ENCODE measurements at regions of chr2 and their contacts with region 1.

Region 1: DNA sequence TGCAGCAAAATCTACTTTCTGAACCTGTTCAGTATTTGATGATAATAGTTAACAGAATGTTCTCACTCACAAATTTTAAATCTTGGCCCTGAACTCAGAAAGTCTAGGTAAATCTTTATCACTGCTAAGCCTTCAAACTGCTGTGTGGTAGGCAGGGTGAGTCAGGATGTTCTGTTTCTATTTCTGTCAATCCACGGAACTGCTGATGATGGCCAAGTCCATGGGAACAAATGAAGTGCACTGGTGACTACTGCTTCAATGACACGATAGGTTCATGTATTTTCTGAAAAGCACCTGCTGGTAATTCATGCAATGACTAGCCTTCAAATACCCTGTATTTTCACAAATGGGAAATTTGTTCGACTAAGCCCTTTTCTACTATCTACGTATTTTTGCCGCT is 14.2 kb downstream of the NIFK start:
- DNase-seq: no peak
- H3K4me3 ChIP-seq: no peak overlapping the region
- H3K27ac ChIP-seq: no peak overlapping the region
- H3K4me1 ChIP-seq: no peaks in the 10 kb centered on the region
- CTCF ChIP-seq: no peak

Region 2: GRCh38 chr2:121085801-121086200 is 636.7 kb before region 1 on chr2:
- CTCF ChIA-PET with region 1: no interaction called
- POLR2A ChIA-PET with region 1: no interaction called
- intact Hi-C with region 1: loop called (anchors 1 kb)
- DNase-seq: no peak
- H3K4me3 ChIP-seq: no peak overlapping the region
- H3K27ac ChIP-seq: no peak overlapping the region
- H3K4me1 ChIP-seq: no peaks in the 10 kb centered on the region
- CTCF ChIP-seq: no peak

Region 3: DNA sequence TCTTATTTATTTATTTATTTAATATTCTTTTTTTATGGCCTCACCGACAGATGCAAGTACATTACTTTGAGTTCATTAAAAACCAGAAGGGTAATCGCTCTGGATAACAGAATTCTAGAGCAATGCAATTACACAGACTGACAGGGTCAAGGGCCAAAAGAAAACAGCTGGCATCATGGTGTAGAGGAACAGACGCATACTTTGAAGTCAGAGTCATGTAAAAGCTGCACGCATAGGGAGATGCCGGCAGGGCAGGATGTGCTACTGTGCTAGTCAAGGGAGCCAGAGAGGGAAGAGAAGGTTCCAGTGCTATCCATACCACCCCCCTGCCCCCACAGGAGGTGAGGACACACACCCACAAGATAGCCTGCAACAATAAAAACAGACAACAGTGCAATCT is 322.3 kb before region 1 on chr2:
- CTCF ChIA-PET with region 1: no interaction called
- POLR2A ChIA-PET with region 1: no interaction called
- intact Hi-C with region 1: loop called (anchors 1 kb)
- DNase-seq: no peak
- H3K4me3 ChIP-seq: no peak overlapping the region
- H3K27ac ChIP-seq: no peak overlapping the region
- H3K4me1 ChIP-seq: no peaks in the 10 kb centered on the region
- CTCF ChIP-seq: no peak

Region 4: DNA sequence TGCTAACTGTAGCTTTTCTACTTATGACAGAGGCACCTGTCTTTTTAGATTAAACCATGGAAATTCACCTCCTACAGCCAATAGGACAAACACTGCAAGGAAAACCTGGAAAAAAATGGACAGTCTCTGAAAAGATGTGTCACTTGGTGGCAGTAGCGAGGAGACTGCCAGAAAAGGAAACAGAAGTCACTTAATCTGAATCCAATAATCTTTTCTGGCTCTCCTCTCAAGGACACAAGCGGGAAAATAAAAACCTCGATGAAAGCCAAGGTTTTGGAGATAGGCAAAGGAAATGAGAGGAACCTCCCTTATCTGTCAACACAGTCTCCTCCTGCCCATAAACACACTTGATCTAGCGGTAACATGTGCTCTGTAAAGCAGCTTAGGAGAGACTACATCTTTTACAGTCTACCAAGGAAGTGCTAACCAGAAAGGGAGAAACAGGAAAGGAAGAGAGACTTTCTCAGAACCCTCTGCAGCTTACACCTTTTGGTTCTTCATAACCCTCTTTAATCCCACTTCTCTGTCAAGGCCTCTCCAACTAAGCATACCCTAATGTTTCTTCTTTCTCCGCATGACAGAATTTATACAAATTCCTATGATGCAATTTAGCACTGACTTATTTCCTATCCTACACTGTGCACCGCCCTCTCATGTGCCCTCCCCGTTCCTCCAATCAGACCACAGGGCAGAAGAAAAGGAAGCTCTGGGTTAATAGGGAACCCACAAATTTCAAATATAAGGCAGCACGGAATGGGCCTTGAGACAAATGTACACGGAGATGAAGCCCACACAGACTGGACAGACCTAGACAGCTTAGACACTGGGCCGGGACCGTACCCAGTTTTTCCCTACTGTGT is 126.0 kb before region 1 on chr2:
- CTCF ChIA-PET with region 1: no interaction called
- POLR2A ChIA-PET with region 1: no interaction called
- intact Hi-C with region 1: loop called (anchors 1 kb)
- DNase-seq: peak; percentile 80
- H3K4me3 ChIP-seq: peak overlapping the region; percentile 60
- H3K27ac ChIP-seq: peak overlapping the region; percentile 85
- H3K4me1 ChIP-seq: peaks cover 36% of the 10 kb centered on the region
- CTCF ChIP-seq: peak; percentile 84

Region 5: GRCh38 chr2:121699421-121700333 is 22.8 kb before region 1 on chr2:
- CTCF ChIA-PET with region 1: no interaction called
- POLR2A ChIA-PET with region 1: no interaction called
- intact Hi-C with region 1: no loop called
- DNase-seq: peak; percentile 40
- H3K4me3 ChIP-seq: no peak overlapping the region
- H3K27ac ChIP-seq: no peak overlapping the region
- H3K4me1 ChIP-seq: peaks cover 7% of the 10 kb centered on the region
- CTCF ChIP-seq: no peak